ENCODE measurements at regions of chr1 and their contacts with region 1.

Region 1: DNA sequence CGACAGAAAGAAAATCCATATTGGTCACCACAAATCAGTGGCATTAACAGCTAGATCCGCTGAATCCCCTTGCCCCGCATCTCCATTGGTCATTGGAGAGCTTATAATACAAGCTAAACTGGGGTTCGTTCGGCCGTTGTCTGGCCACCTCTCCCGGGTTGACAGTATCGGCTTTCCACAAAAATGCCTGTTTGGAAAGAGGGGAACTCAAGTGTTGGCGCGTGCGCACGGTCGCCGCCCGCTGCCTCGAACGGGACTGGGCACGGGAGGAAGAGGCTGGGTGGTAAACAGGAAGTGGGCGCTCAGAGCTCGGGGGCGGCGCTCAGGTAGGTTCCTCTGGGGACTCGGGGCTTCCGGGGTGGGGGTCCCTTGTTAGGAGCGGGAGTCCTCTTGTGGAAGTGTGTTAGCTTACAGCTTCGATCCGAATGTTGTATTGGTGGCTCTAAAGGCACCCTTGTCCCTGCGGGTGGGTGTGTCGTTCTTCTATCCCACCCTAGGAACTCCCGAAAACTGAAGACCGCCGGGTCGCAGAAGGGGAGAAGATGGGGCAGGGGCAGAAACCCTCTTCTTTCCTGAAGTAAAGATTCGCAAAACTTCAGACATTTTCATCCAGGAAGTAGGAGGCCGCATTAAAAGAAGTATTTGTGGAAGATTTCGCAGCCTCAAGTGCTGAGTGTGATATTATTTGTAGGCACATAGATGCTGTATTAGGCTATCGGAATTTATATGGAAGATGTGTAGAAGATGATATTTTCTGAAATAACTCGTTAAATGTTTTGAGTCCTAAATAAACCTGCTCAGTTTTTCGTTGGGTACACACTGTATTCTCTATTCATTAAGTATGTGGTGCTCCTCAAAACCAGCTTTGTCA is 962 bp downstream of the BROX start:
- DNase-seq: peak; percentile 89 to 95 (median 90)
- H3K4me3 ChIP-seq: peak overlapping the region; percentile 84 to 100
- H3K4me3 Mint-ChIP-seq: peak overlapping the region; percentile 94 to 100 (median 98)
- H3K27ac ChIP-seq: peak overlapping the region; percentile 91
- H3K27ac Mint-ChIP-seq: peak overlapping the region; percentile 98 to 100 (median 100)
- H3K4me1 ChIP-seq: peaks cover 44% of the 10 kb centered on the region
- H3K4me1 Mint-ChIP-seq: peaks cover 29 to 76% (median 48%) of the 10 kb centered on the region in 4 donors
- H3K27me3 ChIP-seq: no peaks in the 10 kb centered on the region
- H3K27me3 Mint-ChIP-seq: no peaks in the 10 kb centered on the region

Region 2: DNA sequence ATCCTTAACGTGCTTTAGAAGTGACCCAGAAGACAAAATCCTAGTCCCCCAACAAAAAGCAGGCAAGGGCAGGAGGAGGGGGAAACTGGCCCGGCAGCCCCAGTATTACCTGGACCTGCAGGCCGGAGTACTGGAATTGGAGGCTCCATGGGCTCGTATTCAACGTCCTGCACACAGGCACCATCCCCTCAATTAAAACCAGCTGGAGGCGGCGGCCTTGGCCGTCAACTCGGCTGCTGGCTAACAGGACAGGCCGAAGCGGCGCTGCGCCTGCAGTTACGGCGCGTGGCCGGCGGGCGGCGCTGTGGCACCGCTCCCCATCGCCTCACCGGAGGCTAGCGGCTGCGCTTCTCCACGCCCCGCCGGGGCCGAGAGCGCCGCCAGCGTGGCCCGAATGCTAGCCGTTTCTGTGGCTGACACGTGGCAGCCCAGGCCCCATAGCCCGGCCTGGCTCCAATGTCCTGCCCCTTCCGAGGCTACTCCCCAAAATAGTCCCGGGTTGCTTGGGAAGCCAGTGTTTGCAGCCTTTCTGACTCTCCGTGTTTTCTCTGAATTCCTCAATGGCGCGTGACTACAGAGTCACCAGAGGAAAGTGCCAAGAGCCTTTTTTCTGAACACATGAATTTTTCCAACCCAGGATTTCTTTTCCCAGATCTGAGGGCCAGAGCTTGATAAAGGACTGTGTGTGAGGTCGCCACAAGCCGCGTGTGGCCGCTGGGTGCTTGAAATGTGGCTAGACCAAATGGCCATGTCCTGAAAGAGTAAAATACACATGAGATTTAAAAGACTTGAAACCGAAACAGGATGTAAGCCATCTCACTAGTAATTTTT is 247.9 kb before region 1 on chr1:
- CTCF ChIA-PET with region 1: no interaction called
- POLR2A ChIA-PET with region 1: interaction called, 8 read pairs
- intact Hi-C with region 1: loop called (anchors 1 kb)
- DNase-seq: peak; percentile 66 to 84 (median 79)
- H3K4me3 ChIP-seq: peak overlapping the region; percentile 62 to 73
- H3K4me3 Mint-ChIP-seq: peak overlapping the region; percentile 82 to 95 (median 89)
- H3K27ac ChIP-seq: peak overlapping the region; percentile 31
- H3K27ac Mint-ChIP-seq: peak overlapping the region; percentile 62 to 95 (median 91)
- H3K4me1 ChIP-seq: peaks cover 12% of the 10 kb centered on the region
- H3K4me1 Mint-ChIP-seq: peaks cover 8 to 14% (median 11%) of the 10 kb centered on the region in 4 donors
- H3K27me3 ChIP-seq: no peaks in the 10 kb centered on the region
- H3K27me3 Mint-ChIP-seq: peaks cover 0 to 5% of the 10 kb centered on the region in 2 donors

Region 3: DNA sequence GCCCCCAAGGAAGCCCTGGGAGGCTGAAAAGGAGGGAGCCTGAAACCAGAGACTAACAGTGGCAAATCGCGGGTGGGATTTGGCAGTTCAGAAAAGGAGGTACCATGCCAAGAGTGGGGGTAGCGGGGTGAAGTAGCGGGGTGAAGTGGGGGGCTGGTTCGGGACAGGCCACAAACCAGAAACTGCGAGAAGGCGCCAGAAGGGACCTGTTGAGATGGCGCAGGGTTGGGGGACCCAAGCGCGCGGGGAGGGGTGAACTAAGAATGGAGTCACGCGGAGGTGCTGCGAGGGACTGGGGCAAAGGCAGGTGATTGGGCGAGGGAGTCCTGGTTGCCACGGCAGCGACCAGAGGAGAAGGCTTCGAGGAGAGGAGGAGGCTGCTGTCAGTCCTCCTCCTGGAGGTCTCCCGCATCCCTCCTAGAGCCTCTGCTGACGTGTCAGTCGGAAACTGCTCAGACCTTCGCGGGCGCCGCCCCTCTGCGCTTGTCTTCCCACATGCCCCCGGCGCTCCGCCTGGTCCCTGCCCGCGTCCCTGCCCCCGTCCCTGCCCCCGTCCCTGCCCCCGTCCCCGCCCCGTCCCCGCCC is 95.9 kb before region 1 on chr1:
- CTCF ChIA-PET with region 1: no interaction called
- POLR2A ChIA-PET with region 1: interaction called, 20 read pairs
- intact Hi-C with region 1: loop called (anchors 1 kb)
- DNase-seq: peak; percentile 89 to 99 (median 92)
- H3K4me3 ChIP-seq: peak overlapping the region; percentile 25 to 74
- H3K4me3 Mint-ChIP-seq: peak overlapping the region; percentile 89 to 97 (median 94)
- H3K27ac ChIP-seq: peak overlapping the region; percentile 68
- H3K27ac Mint-ChIP-seq: peak overlapping the region; percentile 90 to 98 (median 97)
- H3K4me1 ChIP-seq: peaks cover 22% of the 10 kb centered on the region
- H3K4me1 Mint-ChIP-seq: peaks cover 19 to 37% (median 28%) of the 10 kb centered on the region in 4 donors
- H3K27me3 ChIP-seq: no peaks in the 10 kb centered on the region
- H3K27me3 Mint-ChIP-seq: peaks cover 15 to 24% of the 10 kb centered on the region in 2 donors

Region 4: GRCh38 chr1:222654849-222655248 is 58.5 kb before region 1 on chr1:
- CTCF ChIA-PET with region 1: interaction called, 11 read pairs
- POLR2A ChIA-PET with region 1: interaction called, 14 read pairs
- intact Hi-C with region 1: loop called (anchors 1 kb)
- DNase-seq: peak; percentile 80 to 92 (median 87)
- H3K4me3 ChIP-seq: no peak overlapping the region
- H3K4me3 Mint-ChIP-seq: peak overlapping the region; percentile 37 to 76 (median 60)
- H3K27ac ChIP-seq: peak overlapping the region; percentile 67
- H3K27ac Mint-ChIP-seq: peak overlapping the region; percentile 90 to 98 (median 95)
- H3K4me1 ChIP-seq: peaks cover 32% of the 10 kb centered on the region
- H3K4me1 Mint-ChIP-seq: peaks cover 33 to 55% (median 46%) of the 10 kb centered on the region in 4 donors
- H3K27me3 ChIP-seq: no peaks in the 10 kb centered on the region
- H3K27me3 Mint-ChIP-seq: no peaks in the 10 kb centered on the region

Region 5: DNA sequence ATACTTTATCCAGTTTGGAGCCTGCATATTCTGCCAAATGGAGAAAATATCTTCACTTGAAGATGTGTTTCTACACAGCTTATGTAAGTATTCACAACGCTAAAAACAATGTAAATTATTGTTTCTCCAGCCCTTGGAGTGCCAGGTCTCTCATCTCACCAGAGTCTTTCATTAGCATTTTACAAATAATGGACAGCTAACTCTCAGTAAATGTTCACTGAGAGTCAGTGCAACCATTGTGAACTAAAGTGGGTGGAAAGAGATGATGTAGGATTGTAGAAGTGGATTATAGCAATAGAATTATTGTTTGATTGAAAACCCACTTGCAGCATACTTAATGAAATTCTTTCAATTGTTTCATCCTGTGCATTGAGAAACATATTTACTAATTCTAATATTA is 15.4 kb after region 1 on chr1:
- CTCF ChIA-PET with region 1: interaction called, 3 read pairs
- POLR2A ChIA-PET with region 1: interaction called, 11 read pairs
- intact Hi-C with region 1: no loop called
- DNase-seq: no peak
- H3K4me3 ChIP-seq: no peak overlapping the region
- H3K4me3 Mint-ChIP-seq: no peak overlapping the region
- H3K27ac ChIP-seq: no peak overlapping the region
- H3K27ac Mint-ChIP-seq: peak overlapping the region in 1 of 7 donors; percentile 55
- H3K4me1 ChIP-seq: no peaks in the 10 kb centered on the region
- H3K4me1 Mint-ChIP-seq: peaks cover 0 to 10% (median 5%) of the 10 kb centered on the region in 4 donors
- H3K27me3 ChIP-seq: no peaks in the 10 kb centered on the region
- H3K27me3 Mint-ChIP-seq: no peaks in the 10 kb centered on the region

Region 6: DNA sequence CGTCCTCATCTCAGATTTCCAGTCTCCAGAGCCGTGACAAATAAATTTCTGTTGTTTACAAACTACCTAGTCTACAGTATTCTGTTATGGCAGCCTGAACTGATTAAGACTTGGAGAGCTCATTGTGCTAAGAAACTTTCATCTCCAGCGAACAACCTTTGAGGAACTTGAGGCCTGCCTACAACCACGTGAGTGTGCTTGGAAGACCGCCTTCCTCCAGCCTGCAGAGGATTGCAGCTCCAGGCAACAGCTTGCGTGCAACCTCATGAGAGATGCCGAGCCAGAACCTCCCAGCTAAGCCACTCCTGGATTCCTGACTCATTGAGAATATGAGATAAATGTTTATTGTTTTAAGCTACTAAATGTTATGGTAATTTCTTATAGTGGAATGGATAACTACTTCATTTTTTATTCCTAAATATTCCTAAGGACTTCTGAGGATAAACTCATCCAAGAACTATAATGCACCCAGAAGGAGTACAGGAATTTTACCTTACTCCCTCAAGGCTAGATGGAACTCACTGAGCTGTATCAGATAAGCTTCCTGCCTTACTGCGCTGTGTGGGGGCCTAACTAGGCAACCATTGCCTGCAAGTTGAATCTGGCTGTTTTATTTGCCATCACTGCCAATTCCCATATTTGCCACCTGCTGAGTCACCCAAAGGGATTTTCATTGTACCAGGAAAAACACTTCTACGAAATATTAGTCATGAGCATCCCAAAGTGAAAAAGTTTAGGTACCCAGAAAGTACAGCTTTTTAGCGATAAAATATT is 41.2 kb after region 1 on chr1:
- CTCF ChIA-PET with region 1: no interaction called
- POLR2A ChIA-PET with region 1: no interaction called
- intact Hi-C with region 1: no loop called
- DNase-seq: peak in 1 of 5 donors; percentile 17
- H3K4me3 ChIP-seq: no peak overlapping the region
- H3K4me3 Mint-ChIP-seq: no peak overlapping the region
- H3K27ac ChIP-seq: no peak overlapping the region
- H3K27ac Mint-ChIP-seq: no peak overlapping the region
- H3K4me1 ChIP-seq: no peaks in the 10 kb centered on the region
- H3K4me1 Mint-ChIP-seq: no peaks in the 10 kb centered on the region
- H3K27me3 ChIP-seq: no peaks in the 10 kb centered on the region
- H3K27me3 Mint-ChIP-seq: peaks cover 8 to 13% of the 10 kb centered on the region in 2 donors

Region 7: DNA sequence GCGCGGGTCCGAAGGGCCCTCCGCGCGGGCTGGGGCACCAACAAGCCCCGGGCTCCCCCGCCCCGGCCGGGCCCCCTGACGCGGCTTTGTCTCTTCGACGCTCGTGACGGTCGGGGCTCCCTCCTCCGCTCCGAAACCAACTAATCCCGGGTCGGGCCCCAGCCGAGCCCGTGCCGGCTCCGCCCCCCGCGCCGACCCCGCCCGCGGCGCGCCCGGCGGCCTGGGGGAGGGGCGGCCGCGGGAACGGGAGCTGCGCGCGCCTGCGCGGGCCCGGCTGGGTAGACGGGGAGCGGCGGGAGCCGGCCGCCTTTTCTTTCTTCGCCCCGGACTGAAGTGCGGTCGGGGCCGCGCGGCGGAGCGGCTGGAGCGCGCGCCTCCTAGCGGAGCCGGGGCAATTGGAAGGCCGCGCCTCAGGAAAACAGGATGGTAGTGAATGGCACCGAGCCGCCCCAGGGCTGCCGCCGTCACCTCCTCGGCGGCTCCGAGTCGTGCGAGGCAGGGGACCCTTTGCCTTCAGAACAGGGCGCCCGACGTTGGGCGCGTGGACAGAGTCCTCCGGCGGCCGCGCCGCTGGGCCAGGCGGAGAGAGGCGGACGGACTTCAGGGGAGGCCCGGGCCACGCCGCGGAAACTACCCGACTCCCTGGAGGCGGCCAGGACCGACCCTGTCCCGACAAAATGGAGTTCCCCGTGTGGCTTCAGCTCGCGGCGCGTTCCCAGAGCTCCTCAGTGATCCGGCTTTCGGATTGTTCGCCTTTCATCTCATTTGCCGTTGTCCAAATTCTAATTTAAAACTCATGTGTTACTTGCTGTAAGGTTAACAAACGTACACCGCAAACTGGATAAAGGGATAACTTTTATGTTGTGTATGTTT is 1132.7 kb after region 1 on chr1 and contains the start of gene TP53BP2:
- CTCF ChIA-PET with region 1: no interaction called
- POLR2A ChIA-PET with region 1: interaction called, 10 read pairs
- intact Hi-C with region 1: no loop called
- DNase-seq: peak; percentile 89 to 92 (median 91)
- H3K4me3 ChIP-seq: peak within 1 kb of the TSS; percentile 74 to 84
- H3K4me3 Mint-ChIP-seq: peak within 1 kb of the TSS; percentile 94 to 98 (median 95)
- H3K27ac ChIP-seq: peak within 1 kb of the TSS; percentile 98
- H3K27ac Mint-ChIP-seq: peak within 1 kb of the TSS; percentile 97 to 100 (median 98)
- H3K4me1 ChIP-seq: peaks cover 52% of the 10 kb centered on the region
- H3K4me1 Mint-ChIP-seq: peaks cover 31 to 51% (median 35%) of the 10 kb centered on the region in 4 donors
- H3K27me3 ChIP-seq: no peaks in the 10 kb centered on the region
- H3K27me3 Mint-ChIP-seq: no peaks in the 10 kb centered on the region
- total RNA-seq, gene TP53BP2: 48.3 to 49.8 TPM